GM12878 (cell line): ENCODE measurements at regions of chr17 and their contacts with region 1.

Region 1: GRCh38 chr17:68172461-68172954 is 75.3 kb upstream of the AMZ2 start:
- DNase-seq: no peak
- ATAC-seq: peak; percentile 90
- H3K4me3 ChIP-seq: no peak overlapping the region
- H3K27ac ChIP-seq: no peak overlapping the region
- H3K4me1 ChIP-seq: no peaks in the 10 kb centered on the region; the same call in 1 of the 2 replicates
- H3K27me3 ChIP-seq: no peaks in the 10 kb centered on the region
- CTCF ChIP-seq: peak; percentile 78 to 99 (median 96)
- EP300 ChIP-seq: no peak
- POLR2A ChIP-seq: no peak
- RAD21 ChIP-seq: peak; percentile 94

Region 2: GRCh38 chr17:68057531-68057952 is 115.0 kb before region 1 on chr17:
- CTCF ChIA-PET with region 1: interaction called, 7 read pairs
- POLR2A ChIA-PET with region 1: no interaction called
- RAD21 ChIA-PET with region 1: no interaction called
- SMC1A ChIA-PET with region 1: no interaction called
- in situ Hi-C with region 1: no loop called
- intact Hi-C with region 1: loop called (anchors 10 kb)
- DNase-seq: no peak
- ATAC-seq: peak; percentile 74
- H3K4me3 ChIP-seq: no peak overlapping the region
- H3K27ac ChIP-seq: no peak overlapping the region
- H3K4me1 ChIP-seq: peaks cover 9% of the 10 kb centered on the region
- H3K27me3 ChIP-seq: no peaks in the 10 kb centered on the region
- CTCF ChIP-seq: peak; percentile 31 to 58 (median 50)
- EP300 ChIP-seq: no peak
- POLR2A ChIP-seq: no peak
- RAD21 ChIP-seq: peak; percentile 25; the same call in 1 of the 2 replicates

Region 3: GRCh38 chr17:68080411-68081150 is 91.9 kb before region 1 on chr17:
- CTCF ChIA-PET with region 1: no interaction called
- POLR2A ChIA-PET with region 1: no interaction called
- RAD21 ChIA-PET with region 1: no interaction called
- SMC1A ChIA-PET with region 1: no interaction called
- in situ Hi-C with region 1: no loop called
- intact Hi-C with region 1: no loop called
- DNase-seq: no peak
- ATAC-seq: no peak
- H3K4me3 ChIP-seq: no peak overlapping the region
- H3K27ac ChIP-seq: no peak overlapping the region
- H3K4me1 ChIP-seq: peaks cover 1% of the 10 kb centered on the region
- H3K27me3 ChIP-seq: no peaks in the 10 kb centered on the region
- CTCF ChIP-seq: no peak
- EP300 ChIP-seq: no peak
- POLR2A ChIP-seq: no peak
- RAD21 ChIP-seq: no peak

Region 4: GRCh38 chr17:68195667-68196393 is 23.3 kb after region 1 on chr17:
- CTCF ChIA-PET with region 1: interaction called, 125 read pairs
- POLR2A ChIA-PET with region 1: no interaction called
- RAD21 ChIA-PET with region 1: interaction called, 44 read pairs
- SMC1A ChIA-PET with region 1: interaction called, 35 read pairs
- in situ Hi-C with region 1: no loop called
- intact Hi-C with region 1: loop called (anchors 1 kb)
- DNase-seq: no peak
- ATAC-seq: no peak
- H3K4me3 ChIP-seq: no peak overlapping the region
- H3K27ac ChIP-seq: no peak overlapping the region
- H3K4me1 ChIP-seq: peaks cover 35% of the 10 kb centered on the region
- H3K27me3 ChIP-seq: peaks cover 19 to 26% of the 10 kb centered on the region in 2 experiments; a peak in 3 of 4 replicates
- CTCF ChIP-seq: no peak
- EP300 ChIP-seq: no peak
- POLR2A ChIP-seq: peak; percentile 33; the same call in 1 of the 2 replicates
- RAD21 ChIP-seq: no peak

Region 5: DNA sequence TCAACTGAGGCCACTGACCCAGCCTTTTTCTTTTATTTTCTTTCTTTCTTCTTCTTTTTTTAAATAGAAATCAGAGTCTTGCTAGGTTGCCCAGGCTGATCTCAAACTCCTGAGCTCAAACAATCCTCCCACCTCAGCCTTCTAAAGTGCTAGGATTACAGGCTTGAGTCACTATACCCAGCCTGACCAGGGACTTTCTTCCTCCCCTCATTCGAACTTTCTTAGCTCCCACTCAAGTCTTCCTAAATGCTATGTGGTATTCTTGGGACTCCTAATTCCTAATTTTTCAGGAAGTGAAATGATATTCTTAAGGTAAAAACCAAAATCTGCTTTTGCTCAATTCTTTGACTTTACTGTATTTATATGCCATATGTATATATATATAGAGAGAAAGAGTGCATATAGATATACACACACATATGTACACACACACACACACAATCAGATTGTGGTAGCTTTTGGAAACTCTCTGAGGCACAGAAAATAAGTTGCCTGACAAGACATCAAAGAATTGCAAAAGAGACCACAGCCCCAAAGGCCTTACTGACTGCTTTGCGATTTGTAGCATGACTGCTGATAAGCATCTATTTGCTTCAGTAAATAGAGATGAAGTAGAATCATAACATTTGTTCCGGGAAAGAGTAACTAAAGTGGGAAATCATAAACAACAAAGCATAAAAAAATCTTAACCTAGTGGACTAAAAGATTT is 65.8 kb after region 1 on chr17:
- CTCF ChIA-PET with region 1: interaction called, 9 read pairs
- POLR2A ChIA-PET with region 1: no interaction called
- RAD21 ChIA-PET with region 1: no interaction called
- SMC1A ChIA-PET with region 1: interaction called, 10 read pairs
- in situ Hi-C with region 1: no loop called
- intact Hi-C with region 1: no loop called
- DNase-seq: no peak
- ATAC-seq: peak; percentile 33
- H3K4me3 ChIP-seq: peak overlapping the region; percentile 61
- H3K27ac ChIP-seq: peak overlapping the region; percentile 96
- H3K4me1 ChIP-seq: peaks cover 41% of the 10 kb centered on the region
- H3K27me3 ChIP-seq: no peaks in the 10 kb centered on the region
- CTCF ChIP-seq: no peak
- EP300 ChIP-seq: no peak
- POLR2A ChIP-seq: no peak
- RAD21 ChIP-seq: no peak

Region 6: DNA sequence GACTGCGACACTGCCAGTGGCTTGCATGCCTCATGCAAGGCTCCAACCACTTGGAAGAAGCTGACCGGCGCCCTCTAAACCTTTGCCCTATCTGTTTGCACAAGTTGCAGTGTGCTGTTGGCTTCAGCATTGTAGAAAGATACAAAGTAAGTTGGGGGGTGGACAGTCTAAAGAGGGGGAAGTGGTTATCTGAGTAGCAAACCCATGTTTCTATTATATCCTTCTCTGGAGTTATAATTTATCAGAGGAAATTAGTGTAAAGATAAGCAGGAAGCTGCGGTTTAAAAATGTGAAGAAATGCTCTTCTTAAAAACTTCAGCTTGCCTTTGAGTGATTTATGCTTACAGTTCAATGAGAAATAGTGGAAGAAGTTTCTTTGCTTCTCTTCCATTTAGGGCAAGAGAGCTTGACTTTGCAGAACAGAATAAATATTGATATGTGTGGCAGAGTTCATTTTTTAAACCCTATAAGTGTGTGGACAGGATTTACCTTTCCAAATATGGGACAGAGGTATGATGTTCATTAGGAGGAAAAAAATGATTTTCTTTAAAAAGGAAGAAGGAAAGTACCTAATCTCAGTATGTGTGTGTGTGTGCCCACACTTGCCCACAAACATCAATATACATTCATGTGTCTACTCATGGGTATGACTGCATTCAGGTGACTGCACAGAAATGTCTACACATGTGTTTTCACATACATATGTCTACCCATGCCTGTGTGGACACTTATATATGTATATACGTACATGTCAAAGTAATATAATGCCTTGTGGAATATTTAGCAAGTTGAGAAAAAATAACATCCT is 83.4 kb after region 1 on chr17:
- CTCF ChIA-PET with region 1: interaction called, 12 read pairs
- POLR2A ChIA-PET with region 1: interaction called, 3 read pairs
- RAD21 ChIA-PET with region 1: interaction called, 4 read pairs
- SMC1A ChIA-PET with region 1: interaction called, 16 read pairs
- in situ Hi-C with region 1: no loop called
- intact Hi-C with region 1: no loop called
- DNase-seq: no peak
- ATAC-seq: peak; percentile 57
- H3K4me3 ChIP-seq: no peak overlapping the region
- H3K27ac ChIP-seq: no peak overlapping the region
- H3K4me1 ChIP-seq: peaks cover 7% of the 10 kb centered on the region; the same call in 1 of the 2 replicates
- H3K27me3 ChIP-seq: no peaks in the 10 kb centered on the region
- CTCF ChIP-seq: no peak
- EP300 ChIP-seq: no peak
- POLR2A ChIP-seq: no peak
- RAD21 ChIP-seq: no peak

Region 7: DNA sequence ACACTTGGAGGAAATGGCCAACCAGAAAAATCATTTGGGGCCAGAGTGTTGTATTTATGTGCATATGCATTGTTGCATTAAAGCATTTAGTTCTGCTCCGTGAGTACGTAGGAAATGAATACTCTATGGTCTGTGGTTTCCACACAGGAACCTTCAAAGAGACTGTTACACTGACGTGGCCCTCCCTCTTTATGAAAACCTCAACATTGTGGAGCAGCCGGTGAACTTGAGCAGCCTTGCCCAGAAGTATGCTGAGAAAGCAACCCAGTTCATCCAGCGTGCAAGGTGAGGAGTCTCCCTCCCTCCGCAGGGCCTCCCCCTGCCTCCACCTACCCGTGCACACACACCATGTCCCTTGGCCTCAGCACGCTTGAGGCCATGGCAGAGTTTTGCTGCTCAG is 184.0 kb after region 1 on chr17:
- CTCF ChIA-PET with region 1: no interaction called
- POLR2A ChIA-PET with region 1: no interaction called
- RAD21 ChIA-PET with region 1: no interaction called
- SMC1A ChIA-PET with region 1: no interaction called
- in situ Hi-C with region 1: no loop called
- intact Hi-C with region 1: no loop called
- DNase-seq: peak; percentile 51
- ATAC-seq: peak; percentile 92
- H3K4me3 ChIP-seq: no peak overlapping the region
- H3K27ac ChIP-seq: no peak overlapping the region
- H3K4me1 ChIP-seq: peaks cover 13% of the 10 kb centered on the region
- H3K27me3 ChIP-seq: no peaks in the 10 kb centered on the region
- CTCF ChIP-seq: no peak
- EP300 ChIP-seq: no peak
- POLR2A ChIP-seq: no peak
- RAD21 ChIP-seq: no peak

Region 8: DNA sequence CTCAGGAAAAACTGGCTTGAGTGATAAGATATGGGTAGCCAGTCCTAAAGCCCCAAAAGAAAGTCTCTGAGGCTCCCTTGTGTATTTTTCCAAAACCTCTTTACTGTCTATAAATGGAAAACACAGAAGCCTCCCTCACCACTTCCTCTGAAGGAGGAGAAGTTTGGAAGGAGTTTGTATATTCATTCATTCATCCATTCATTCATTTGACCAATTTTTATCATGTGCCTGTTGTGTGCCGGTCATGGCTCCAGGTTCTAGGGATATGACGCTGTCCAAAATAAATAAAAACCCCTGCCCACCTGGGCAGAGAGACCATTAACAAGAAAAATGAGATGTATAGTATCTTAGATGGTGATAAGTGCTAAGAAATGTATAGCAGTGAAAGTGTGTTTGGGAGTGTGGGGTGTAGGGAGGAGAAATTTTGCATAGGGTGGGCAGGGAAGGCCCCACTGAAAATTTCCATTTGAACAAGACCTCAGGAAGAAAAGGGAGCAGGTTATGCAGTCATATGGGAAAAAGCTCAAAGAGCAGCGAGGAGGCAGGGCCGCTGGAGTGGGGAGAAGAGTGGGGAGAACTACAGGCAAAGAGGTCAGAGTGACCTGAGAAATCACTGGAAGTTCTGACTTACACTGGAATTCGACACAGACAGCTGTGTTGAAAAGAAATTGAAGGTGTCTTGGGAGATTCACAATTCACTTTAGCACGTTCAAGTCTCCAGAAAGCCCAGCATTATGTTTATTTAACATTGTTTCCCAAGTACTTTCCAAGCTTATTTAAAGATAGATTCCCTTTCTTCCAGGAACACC is 290.9 kb after region 1 on chr17:
- CTCF ChIA-PET with region 1: interaction called, 16 read pairs
- POLR2A ChIA-PET with region 1: no interaction called
- RAD21 ChIA-PET with region 1: interaction called, 14 read pairs
- SMC1A ChIA-PET with region 1: interaction called, 13 read pairs
- in situ Hi-C with region 1: no loop called
- intact Hi-C with region 1: loop called (anchors 2 kb)
- DNase-seq: no peak
- ATAC-seq: no peak
- H3K4me3 ChIP-seq: no peak overlapping the region
- H3K27ac ChIP-seq: no peak overlapping the region; the same call in 1 of the 2 replicates
- H3K4me1 ChIP-seq: peaks cover 37% of the 10 kb centered on the region
- H3K27me3 ChIP-seq: no peaks in the 10 kb centered on the region
- CTCF ChIP-seq: no peak
- EP300 ChIP-seq: no peak
- POLR2A ChIP-seq: no peak
- RAD21 ChIP-seq: no peak